Endothelial cell of umbilical vein (primary cell): ENCODE measurements at regions of chr15 and their contacts with region 1.

Region 1: DNA sequence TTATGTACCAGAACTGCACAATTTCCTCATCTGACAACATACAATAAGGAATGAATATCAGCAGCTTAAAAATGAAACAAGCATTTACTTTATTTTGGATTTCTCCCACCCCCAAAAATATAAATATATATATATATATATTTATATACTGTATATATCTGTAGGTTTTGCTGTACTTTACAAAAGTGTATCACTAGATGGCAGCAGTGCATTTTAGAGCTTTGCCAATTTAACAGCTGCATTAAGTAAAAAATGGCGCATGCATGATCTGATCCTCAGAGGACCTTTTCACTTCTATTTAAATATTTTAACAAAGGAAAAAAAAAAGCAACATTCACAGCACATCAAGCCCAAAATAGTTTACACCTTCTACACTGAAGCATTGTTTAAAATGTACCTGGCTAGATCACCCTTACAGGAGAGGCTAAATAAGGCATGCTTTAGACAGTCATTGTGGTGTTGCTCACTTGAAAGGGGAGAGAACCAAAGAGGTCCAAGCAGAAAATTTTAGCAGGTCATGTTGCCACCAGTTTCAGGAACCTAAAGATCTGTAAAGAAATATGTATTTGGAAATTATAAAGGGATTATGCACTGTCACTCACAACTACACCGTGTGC is 72.6 kb downstream of the NPTN start:
- DNase-seq: peak; percentile 80
- H3K4me3 ChIP-seq: no peak overlapping the region
- H3K27ac ChIP-seq: no peak overlapping the region
- H3K4me1 ChIP-seq: peaks cover 10% of the 10 kb centered on the region
- H3K27me3 ChIP-seq: no peaks in the 10 kb centered on the region
- CTCF ChIP-seq: peak; percentile 10 to 36
- POLR2A ChIP-seq: no peak

Region 2: GRCh38 chr15:73518180-73518862 is 42.3 kb before region 1 on chr15:
- CTCF ChIA-PET with region 1: no interaction called
- POLR2A ChIA-PET with region 1: no interaction called
- dilution Hi-C with region 1: no loop called
- intact Hi-C with region 1: no loop called
- DNase-seq: no peak
- H3K4me3 ChIP-seq: no peak overlapping the region
- H3K27ac ChIP-seq: no peak overlapping the region
- H3K4me1 ChIP-seq: no peaks in the 10 kb centered on the region
- H3K27me3 ChIP-seq: peaks cover 0 to 15% of the 10 kb centered on the region in 2 experiments
- CTCF ChIP-seq: no peak
- POLR2A ChIP-seq: no peak

Region 3: DNA sequence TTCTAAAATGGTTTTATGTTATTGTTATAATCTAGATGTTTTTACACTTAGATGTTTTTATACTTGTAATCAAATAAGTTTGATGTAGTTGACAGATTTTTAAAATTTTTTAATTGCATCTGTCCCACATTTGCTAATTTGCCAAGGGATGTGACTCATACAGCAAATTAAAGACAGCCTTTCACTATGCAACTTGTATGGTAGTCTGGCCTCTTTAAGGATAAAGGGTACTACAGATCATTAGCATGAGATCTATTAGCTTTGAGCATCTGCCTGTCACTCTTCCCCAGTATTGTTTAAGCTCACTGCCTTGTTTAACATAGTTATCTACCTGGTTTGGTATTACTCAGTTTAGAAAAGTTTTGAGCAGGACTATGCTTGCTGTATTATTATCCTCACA is 10.4 kb before region 1 on chr15:
- CTCF ChIA-PET with region 1: interaction called, 14 read pairs
- POLR2A ChIA-PET with region 1: no interaction called
- dilution Hi-C with region 1: no loop called
- intact Hi-C with region 1: no loop called
- DNase-seq: no peak
- H3K4me3 ChIP-seq: no peak overlapping the region
- H3K27ac ChIP-seq: no peak overlapping the region
- H3K4me1 ChIP-seq: no peaks in the 10 kb centered on the region
- H3K27me3 ChIP-seq: no peaks in the 10 kb centered on the region
- CTCF ChIP-seq: no peak
- POLR2A ChIP-seq: no peak

Region 4: GRCh38 chr15:73601451-73602445 is 41.1 kb after region 1 on chr15:
- CTCF ChIA-PET with region 1: interaction called, 8 read pairs
- POLR2A ChIA-PET with region 1: no interaction called
- dilution Hi-C with region 1: no loop called
- intact Hi-C with region 1: loop called (anchors 2 kb)
- DNase-seq: peak; percentile 53
- H3K4me3 ChIP-seq: no peak overlapping the region
- H3K27ac ChIP-seq: peak overlapping the region; percentile 34
- H3K4me1 ChIP-seq: peaks cover 39% of the 10 kb centered on the region
- H3K27me3 ChIP-seq: no peaks in the 10 kb centered on the region
- CTCF ChIP-seq: no peak
- POLR2A ChIP-seq: no peak

Region 5: DNA sequence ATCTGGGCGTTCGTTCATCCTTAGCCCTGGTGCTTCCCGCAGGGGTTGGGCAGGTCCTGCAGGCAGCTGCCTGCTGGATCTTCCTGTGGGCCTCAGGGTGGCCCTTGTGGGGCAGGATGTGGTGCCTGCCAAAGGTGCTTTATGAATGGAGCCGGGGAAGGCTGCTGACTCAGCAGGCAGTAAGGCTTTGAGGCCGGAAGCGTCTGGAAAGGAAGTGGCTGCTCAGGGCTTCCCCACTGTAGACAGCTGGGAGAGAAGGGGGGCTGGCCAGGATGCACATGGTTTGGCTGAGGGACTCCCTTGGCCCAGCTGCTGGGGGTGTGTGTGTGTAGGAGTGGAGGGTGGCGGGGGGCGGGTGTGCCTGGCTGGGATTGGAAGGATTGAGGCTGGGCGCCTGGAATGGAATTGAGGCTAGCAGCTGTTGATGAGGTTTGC is 136.4 kb after region 1 on chr15:
- CTCF ChIA-PET with region 1: interaction called, 81 read pairs
- POLR2A ChIA-PET with region 1: no interaction called
- dilution Hi-C with region 1: no loop called
- intact Hi-C with region 1: loop called (anchors 1 kb)
- DNase-seq: peak; percentile 99
- H3K4me3 ChIP-seq: no peak overlapping the region
- H3K27ac ChIP-seq: peak overlapping the region; percentile 55
- H3K4me1 ChIP-seq: peaks cover 21% of the 10 kb centered on the region
- H3K27me3 ChIP-seq: no peaks in the 10 kb centered on the region
- CTCF ChIP-seq: no peak
- POLR2A ChIP-seq: peak; percentile 65

Region 6: GRCh38 chr15:73781038-73781925 is 220.7 kb after region 1 on chr15:
- CTCF ChIA-PET with region 1: no interaction called
- POLR2A ChIA-PET with region 1: no interaction called
- dilution Hi-C with region 1: no loop called
- intact Hi-C with region 1: loop called (anchors 2 kb)
- DNase-seq: no peak
- H3K4me3 ChIP-seq: no peak overlapping the region
- H3K27ac ChIP-seq: no peak overlapping the region
- H3K4me1 ChIP-seq: no peaks in the 10 kb centered on the region
- H3K27me3 ChIP-seq: no peaks in the 10 kb centered on the region
- CTCF ChIP-seq: peak in 1 of 2 donors; percentile 12
- POLR2A ChIP-seq: no peak